OCI-LY7 (cell line): ENCODE measurements at regions of chr18 and their contacts with region 1.

Region 1: GRCh38 chr18:13471971-13472628 is 253.5 kb downstream of the LDLRAD4 start:
- DNase-seq: no peak
- H3K4me3 ChIP-seq: no peak overlapping the region
- H3K27ac ChIP-seq: no peak overlapping the region
- H3K4me1 ChIP-seq: no peaks in the 10 kb centered on the region
- CTCF ChIP-seq: no peak

Region 2: GRCh38 chr18:13394801-13395200 is 77.3 kb before region 1 on chr18:
- CTCF ChIA-PET with region 1: no interaction called
- POLR2A ChIA-PET with region 1: no interaction called
- intact Hi-C with region 1: loop called (anchors 10 kb)
- DNase-seq: no peak
- H3K4me3 ChIP-seq: no peak overlapping the region
- H3K27ac ChIP-seq: no peak overlapping the region
- H3K4me1 ChIP-seq: no peaks in the 10 kb centered on the region
- CTCF ChIP-seq: no peak